A673 (cell line): ENCODE measurements at regions of chr5 and their contacts with region 1.

Region 1: GRCh38 chr5:41122459-41122858 is 51.3 kb upstream of the MROH2B start:
- DNase-seq: no peak
- H3K4me3 ChIP-seq: no peak overlapping the region
- H3K27ac ChIP-seq: no peak overlapping the region
- H3K4me1 ChIP-seq: no peaks in the 10 kb centered on the region
- H3K27me3 ChIP-seq: no peaks in the 10 kb centered on the region
- CTCF ChIP-seq: no peak

Region 2: GRCh38 chr5:41356786-41357185 is 234.3 kb after region 1 on chr5:
- CTCF ChIA-PET with region 1: no interaction called
- POLR2A ChIA-PET with region 1: no interaction called
- intact Hi-C with region 1: loop called (anchors 5 kb)
- DNase-seq: no peak
- H3K4me3 ChIP-seq: no peak overlapping the region
- H3K27ac ChIP-seq: no peak overlapping the region
- H3K4me1 ChIP-seq: no peaks in the 10 kb centered on the region
- H3K27me3 ChIP-seq: no peaks in the 10 kb centered on the region
- CTCF ChIP-seq: no peak

Region 3: GRCh38 chr5:41524174-41524573 is 401.7 kb after region 1 on chr5:
- CTCF ChIA-PET with region 1: no interaction called
- POLR2A ChIA-PET with region 1: no interaction called
- intact Hi-C with region 1: loop called (anchors 10 kb)
- DNase-seq: peak; percentile 60
- H3K4me3 ChIP-seq: no peak overlapping the region
- H3K27ac ChIP-seq: no peak overlapping the region
- H3K4me1 ChIP-seq: no peaks in the 10 kb centered on the region
- H3K27me3 ChIP-seq: no peaks in the 10 kb centered on the region
- CTCF ChIP-seq: peak; percentile 64